Keratinocyte (primary cell): ENCODE measurements at regions of chr11 and their contacts with region 1.

Region 1: GRCh38 chr11:1532014-1532586 is 40.0 kb downstream of the DUSP8 start:
- DNase-seq: peak; percentile 85
- H3K4me3 ChIP-seq: peak overlapping the region in 2 of 3 experiments; percentile 48 to 54
- H3K27ac ChIP-seq: peak overlapping the region; percentile 86
- H3K4me1 ChIP-seq: peaks cover 66% of the 10 kb centered on the region
- H3K27me3 ChIP-seq: no peaks in the 10 kb centered on the region
- CTCF ChIP-seq: no peak

Region 2: DNA sequence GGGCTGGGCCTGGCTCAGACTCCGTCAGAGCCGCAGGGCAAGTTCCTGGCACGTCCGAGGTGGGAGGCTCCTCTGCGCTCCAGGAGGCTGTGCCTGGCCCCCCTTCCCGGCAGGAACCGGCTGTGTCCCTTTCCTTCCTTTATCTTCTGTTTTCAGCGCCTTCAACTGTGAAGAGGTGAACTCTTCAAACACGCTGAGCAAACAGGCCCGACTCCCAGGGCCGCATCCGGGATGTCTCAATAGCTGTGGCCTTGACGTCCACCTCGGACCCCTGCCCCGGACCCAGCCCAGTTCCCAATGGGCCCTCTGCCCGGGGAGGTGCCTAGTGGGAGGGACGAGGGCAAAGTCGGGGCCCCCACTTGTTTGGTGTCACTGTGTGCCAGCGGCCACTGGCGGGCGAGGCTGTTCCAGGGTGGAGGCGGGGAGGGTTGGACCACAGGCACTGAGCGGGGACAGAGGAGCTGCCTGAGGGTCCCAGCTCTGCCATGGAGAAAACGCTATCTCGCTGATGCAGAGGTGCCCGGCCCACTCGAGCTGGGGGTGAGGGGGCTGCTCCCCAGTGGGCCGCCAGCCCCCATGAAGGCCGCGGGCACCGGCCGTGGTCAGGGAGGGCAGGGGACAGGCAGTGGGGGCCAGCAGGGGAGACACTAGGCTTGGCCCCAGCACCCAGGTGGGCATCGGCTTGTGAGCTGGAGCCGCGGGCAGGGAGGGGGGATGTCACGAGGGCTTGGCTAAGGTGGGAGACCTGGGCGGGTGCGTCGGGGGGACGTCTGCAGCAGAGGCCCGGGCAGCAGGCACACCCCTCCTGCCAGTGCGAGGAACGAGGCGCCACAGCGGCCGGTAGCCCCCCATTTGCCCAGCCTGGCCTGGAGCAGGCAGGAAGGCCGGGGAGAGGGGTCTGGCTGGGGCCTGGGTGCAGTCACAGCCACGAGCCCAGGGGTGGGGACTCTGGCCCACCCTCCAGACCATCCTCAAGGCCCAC is 312.0 kb before region 1 on chr11:
- dilution Hi-C with region 1: no loop called
- DNase-seq: no peak
- H3K4me3 ChIP-seq: no peak overlapping the region
- H3K27ac ChIP-seq: no peak overlapping the region
- H3K4me1 ChIP-seq: no peaks in the 10 kb centered on the region
- H3K27me3 ChIP-seq: no peaks in the 10 kb centered on the region
- CTCF ChIP-seq: no peak

Region 3: GRCh38 chr11:1458340-1459218 is 73.5 kb before region 1 on chr11:
- dilution Hi-C with region 1: no loop called
- DNase-seq: no peak
- H3K4me3 ChIP-seq: no peak overlapping the region
- H3K27ac ChIP-seq: no peak overlapping the region
- H3K4me1 ChIP-seq: no peaks in the 10 kb centered on the region
- H3K27me3 ChIP-seq: peaks cover 8% of the 10 kb centered on the region
- CTCF ChIP-seq: peak in 2 of 3 experiments; percentile 36 to 53

Region 4: DNA sequence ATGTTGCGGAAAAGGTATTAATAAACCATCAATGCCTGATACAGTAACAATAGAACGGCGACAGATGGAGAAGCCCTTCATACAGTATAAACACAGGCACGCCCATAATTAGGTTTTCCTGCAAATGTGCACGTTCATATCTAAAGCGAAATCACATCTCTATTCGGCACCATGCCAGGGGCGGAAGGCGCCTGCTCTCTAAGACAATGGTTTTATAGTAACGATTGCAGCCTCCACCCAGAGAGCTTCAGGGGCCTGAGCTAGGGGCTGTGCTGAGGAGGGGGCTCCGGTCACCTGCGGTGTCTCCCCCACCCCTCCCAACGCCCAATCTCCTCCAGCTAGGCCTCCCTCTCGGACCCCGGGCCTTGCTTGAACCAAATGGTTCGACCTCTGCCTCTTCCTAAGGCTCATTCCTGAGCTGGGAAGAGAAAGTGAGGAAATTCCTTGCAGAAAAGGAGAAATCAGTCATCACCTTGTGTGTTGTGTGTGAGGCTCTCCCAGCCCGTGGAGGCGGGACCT is 107.1 kb after region 1 on chr11:
- dilution Hi-C with region 1: loop called (anchors 10 kb)
- DNase-seq: no peak
- H3K4me3 ChIP-seq: no peak overlapping the region
- H3K27ac ChIP-seq: no peak overlapping the region
- H3K4me1 ChIP-seq: no peaks in the 10 kb centered on the region
- H3K27me3 ChIP-seq: peaks cover 28% of the 10 kb centered on the region
- CTCF ChIP-seq: no peak